ENCODE measurements at regions of chr1 and their contacts with region 1.

Region 1: GRCh38 chr1:47192458-47193384 is 2.9 kb upstream of the PDZK1IP1 start:
- DNase-seq: peak; percentile 83
- ATAC-seq: peak; percentile 10 to 31

Region 2: GRCh38 chr1:47262787-47263413 is 70.2 kb after region 1 on chr1:
- intact Hi-C with region 1: loop called in 1 of 2 experiments (anchors 10 kb)
- DNase-seq: peak; percentile 29
- ATAC-seq: no peak

Region 3: GRCh38 chr1:47409311-47410070 is 216.8 kb after region 1 on chr1:
- intact Hi-C with region 1: loop called in 1 of 2 experiments (anchors 10 kb)
- DNase-seq: peak; percentile 27
- ATAC-seq: peak; percentile 75 to 77

Region 4: GRCh38 chr1:47432071-47433036 is 239.6 kb after region 1 on chr1:
- intact Hi-C with region 1: loop called in 1 of 2 experiments (anchors 5 kb)
- DNase-seq: peak; percentile 87
- ATAC-seq: peak; percentile 77 to 81